ENCODE measurements at regions of chr19 and their contacts with region 1.

Region 1: DNA sequence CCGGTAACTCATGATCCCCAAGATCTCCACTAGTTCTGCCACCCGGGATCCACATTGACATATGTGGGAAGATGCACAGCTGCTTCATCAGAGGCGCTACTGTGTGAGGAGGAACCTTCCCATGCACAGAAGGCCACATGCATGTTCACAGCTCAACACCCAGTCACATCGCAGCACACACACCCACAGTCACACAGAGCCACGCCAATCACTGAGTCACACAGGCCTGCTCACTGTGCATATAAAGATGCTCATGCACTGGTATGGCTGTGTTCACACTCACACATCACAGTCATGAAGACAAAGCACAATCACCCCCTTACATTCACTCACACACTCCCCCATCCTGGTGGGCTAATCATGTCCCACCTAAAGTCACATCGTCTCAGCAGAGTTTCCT is 9.8 kb downstream of the CLC start:
- DNase-seq: no peak
- H3K4me3 ChIP-seq: no peak overlapping the region
- H3K27ac ChIP-seq: no peak overlapping the region
- H3K4me1 ChIP-seq: no peaks in the 10 kb centered on the region
- H3K27me3 ChIP-seq: no peaks in the 10 kb centered on the region
- CTCF ChIP-seq: no peak

Region 2: GRCh38 chr19:39623221-39623620 is 104.8 kb before region 1 on chr19:
- CTCF ChIA-PET with region 1: no interaction called
- dilution Hi-C with region 1: loop called (anchors 5 kb)
- in situ Hi-C with region 1: no loop called
- intact Hi-C with region 1: no loop called
- DNase-seq: no peak
- H3K4me3 ChIP-seq: no peak overlapping the region
- H3K27ac ChIP-seq: no peak overlapping the region
- H3K4me1 ChIP-seq: no peaks in the 10 kb centered on the region
- H3K27me3 ChIP-seq: no peaks in the 10 kb centered on the region
- CTCF ChIP-seq: no peak